ENCODE measurements at regions of chr4 and their contacts with region 1.

Region 1: GRCh38 chr4:94621491-94622080 is 136.2 kb upstream of the BMPR1B start:
- DNase-seq: no peak
- H3K4me3 ChIP-seq: no peak overlapping the region
- CTCF ChIP-seq: peak; percentile 52

Region 2: DNA sequence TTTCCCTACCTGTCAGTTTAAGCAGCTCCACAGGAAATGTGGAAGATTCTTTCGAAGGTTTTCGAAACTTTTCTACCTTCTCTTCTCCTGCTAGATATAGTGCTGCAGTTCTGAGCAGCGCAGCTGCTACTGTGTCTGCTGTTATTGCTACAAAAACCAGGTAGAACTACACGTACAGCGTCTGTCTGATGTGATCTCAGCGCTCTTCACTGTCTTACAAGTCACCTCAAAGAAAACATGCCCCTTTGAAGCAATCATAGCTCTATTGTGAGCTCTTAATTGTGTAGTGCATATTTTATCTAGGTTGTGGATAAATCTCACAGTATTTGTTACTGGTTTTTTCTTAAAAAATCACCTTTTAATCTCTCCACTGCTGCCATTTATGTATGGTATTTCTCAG is 11.4 kb before region 1 on chr4:
- CTCF ChIA-PET with region 1: interaction called, 23 read pairs
- POLR2A ChIA-PET with region 1: interaction called, 3 read pairs
- DNase-seq: no peak
- H3K4me3 ChIP-seq: no peak overlapping the region
- CTCF ChIP-seq: no peak

Region 3: GRCh38 chr4:94635177-94635576 is 13.6 kb after region 1 on chr4:
- CTCF ChIA-PET with region 1: interaction called, 33 read pairs
- POLR2A ChIA-PET with region 1: no interaction called
- DNase-seq: no peak
- H3K4me3 ChIP-seq: no peak overlapping the region
- CTCF ChIP-seq: no peak

Region 4: GRCh38 chr4:94732358-94732698 is 110.7 kb after region 1 on chr4:
- CTCF ChIA-PET with region 1: interaction called, 95 read pairs
- POLR2A ChIA-PET with region 1: no interaction called
- DNase-seq: no peak
- H3K4me3 ChIP-seq: no peak overlapping the region
- CTCF ChIP-seq: no peak

Region 5: DNA sequence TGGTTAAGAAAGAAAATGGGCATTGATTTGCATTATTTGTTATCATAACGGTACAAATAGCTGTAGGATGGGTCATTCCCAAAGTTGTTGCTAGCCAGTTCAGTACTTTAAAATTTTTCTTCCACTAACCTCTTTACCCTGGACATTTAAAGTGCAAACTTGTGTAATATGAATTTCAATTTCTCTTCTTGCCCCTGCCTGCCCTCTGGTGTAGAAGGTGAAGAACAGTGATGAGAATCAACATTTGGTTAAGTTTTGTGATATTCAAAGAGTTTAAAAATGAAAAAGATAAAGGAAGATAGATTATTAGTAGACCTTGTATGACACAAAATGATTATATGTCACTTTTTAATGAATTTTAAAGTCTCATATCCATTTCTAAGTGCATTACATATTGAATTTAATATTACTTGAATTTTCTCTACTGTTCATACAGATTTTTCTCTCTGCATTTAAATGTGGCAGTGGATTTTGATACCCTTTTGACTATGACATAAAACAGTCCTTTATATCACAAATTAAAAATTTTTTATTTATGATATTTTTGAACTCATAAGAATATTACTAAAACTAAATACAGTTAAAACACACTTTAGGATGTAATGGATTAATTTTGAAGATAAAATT is 473.9 kb after region 1 on chr4:
- CTCF ChIA-PET with region 1: interaction called, 62 read pairs
- POLR2A ChIA-PET with region 1: no interaction called
- DNase-seq: no peak
- H3K4me3 ChIP-seq: no peak overlapping the region
- CTCF ChIP-seq: peak; percentile 53

Region 6: DNA sequence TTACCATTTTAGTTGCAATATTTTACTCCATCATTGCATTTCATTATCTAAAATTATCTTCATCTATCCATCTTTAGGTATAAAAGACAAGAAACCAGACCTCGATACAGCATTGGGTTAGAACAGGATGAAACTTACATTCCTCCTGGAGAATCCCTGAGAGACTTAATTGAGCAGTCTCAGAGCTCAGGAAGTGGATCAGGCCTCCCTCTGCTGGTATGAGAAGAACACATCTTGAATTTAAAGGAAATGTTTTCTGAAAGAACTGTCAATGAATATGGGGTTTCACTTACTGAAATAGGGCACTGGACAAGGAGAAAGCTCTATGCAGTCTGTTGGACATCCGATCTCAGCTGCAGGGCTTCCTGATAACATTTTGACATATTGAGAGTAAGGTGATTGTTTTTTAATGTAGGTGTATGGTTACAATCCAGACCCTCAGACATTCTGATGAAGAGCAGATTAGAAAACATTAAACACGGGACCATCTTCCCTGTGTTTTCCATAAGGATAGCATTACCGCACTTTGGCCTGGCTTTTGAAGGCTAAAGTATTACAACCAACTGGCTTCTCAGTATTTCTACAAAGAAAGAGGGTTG is 503.4 kb after region 1 on chr4:
- CTCF ChIA-PET with region 1: interaction called, 64 read pairs
- POLR2A ChIA-PET with region 1: no interaction called
- DNase-seq: no peak
- H3K4me3 ChIP-seq: no peak overlapping the region
- CTCF ChIP-seq: peak; percentile 57